A673 (cell line): ENCODE measurements at regions of chr12 and their contacts with region 1.

Region 1: DNA sequence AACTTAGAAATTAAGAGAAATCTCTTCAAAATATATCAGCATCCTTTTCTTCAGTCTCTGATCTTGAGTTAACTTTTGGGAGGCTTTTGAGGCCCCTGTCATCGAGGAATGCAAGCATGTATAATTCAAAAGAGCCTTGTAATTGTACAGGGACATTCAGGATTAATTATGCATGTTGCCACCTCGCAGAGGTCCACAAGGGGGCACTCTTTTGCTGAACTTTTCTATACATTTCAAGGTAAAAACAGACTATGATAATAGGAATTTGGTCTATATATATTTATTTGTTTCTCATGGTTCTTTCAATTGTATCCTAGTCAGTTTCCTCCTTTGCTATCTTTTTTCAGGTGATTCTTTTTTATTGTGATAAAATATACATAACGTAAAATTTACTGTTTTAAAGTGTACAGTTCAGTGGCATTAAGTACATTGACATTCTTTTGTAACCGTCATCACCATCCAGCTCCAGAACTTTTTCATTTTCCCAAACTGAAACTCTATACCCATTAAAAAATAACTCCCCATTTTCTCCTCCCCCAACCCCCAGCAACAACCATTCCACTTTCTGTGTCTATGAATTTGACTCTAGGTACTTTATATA is 47.0 kb upstream of the SLC2A13 start:
- DNase-seq: peak; percentile 73
- H3K4me3 ChIP-seq: no peak overlapping the region
- H3K27ac ChIP-seq: no peak overlapping the region
- H3K4me1 ChIP-seq: no peaks in the 10 kb centered on the region
- H3K27me3 ChIP-seq: no peaks in the 10 kb centered on the region
- CTCF ChIP-seq: peak; percentile 88

Region 2: DNA sequence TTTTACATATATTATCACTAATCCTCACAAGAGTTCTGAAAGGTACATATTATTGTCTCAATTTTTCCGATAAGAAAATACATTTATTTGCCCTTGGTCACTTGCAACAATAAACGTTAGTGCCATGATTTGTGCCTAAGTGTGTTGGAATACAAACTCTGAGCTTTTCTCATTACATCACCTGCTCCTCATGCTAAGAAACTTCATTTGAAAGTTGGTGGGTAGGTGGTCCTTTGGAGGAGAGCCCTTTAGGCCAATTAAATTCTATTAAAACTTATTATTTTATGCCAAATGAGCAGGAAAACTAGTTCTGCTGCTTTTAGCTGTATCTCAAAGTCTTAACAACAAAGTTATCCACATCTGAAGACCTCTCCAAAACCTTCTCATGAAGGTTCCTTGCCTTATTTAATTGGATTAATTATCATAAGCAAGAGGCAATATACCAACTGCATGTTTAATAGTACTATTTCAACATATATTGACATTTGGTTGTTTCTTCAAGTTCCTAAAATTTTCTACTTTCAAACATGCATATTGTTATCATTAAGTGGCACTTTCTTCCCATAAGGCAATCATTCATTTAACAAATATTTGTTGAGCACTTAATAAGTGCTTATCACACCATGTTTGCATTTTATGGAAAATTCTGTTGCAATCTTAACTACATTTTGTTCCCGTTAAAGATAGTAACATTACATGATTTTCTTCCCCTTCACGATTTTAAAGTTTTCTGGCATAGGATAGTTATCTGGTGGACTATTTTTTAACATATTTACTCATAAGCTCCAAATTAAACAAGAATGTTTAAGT is 31.8 kb after region 1 on chr12:
- CTCF ChIA-PET with region 1: no interaction called
- POLR2A ChIA-PET with region 1: interaction called, 10 read pairs
- intact Hi-C with region 1: no loop called
- DNase-seq: no peak
- H3K4me3 ChIP-seq: no peak overlapping the region
- H3K27ac ChIP-seq: no peak overlapping the region
- H3K4me1 ChIP-seq: no peaks in the 10 kb centered on the region
- H3K27me3 ChIP-seq: no peaks in the 10 kb centered on the region
- CTCF ChIP-seq: no peak

Region 3: GRCh38 chr12:40312982-40313576 is 160.2 kb after region 1 on chr12:
- CTCF ChIA-PET with region 1: no interaction called
- POLR2A ChIA-PET with region 1: no interaction called
- intact Hi-C with region 1: loop called (anchors 1 kb)
- DNase-seq: peak; percentile 18
- H3K4me3 ChIP-seq: no peak overlapping the region
- H3K27ac ChIP-seq: no peak overlapping the region
- H3K4me1 ChIP-seq: peaks cover 3% of the 10 kb centered on the region
- H3K27me3 ChIP-seq: no peaks in the 10 kb centered on the region
- CTCF ChIP-seq: peak; percentile 72

Region 4: GRCh38 chr12:40325349-40325960 is 172.6 kb after region 1 on chr12:
- CTCF ChIA-PET with region 1: no interaction called
- POLR2A ChIA-PET with region 1: no interaction called
- intact Hi-C with region 1: no loop called
- DNase-seq: peak; percentile 73
- H3K4me3 ChIP-seq: no peak overlapping the region
- H3K27ac ChIP-seq: no peak overlapping the region
- H3K4me1 ChIP-seq: no peaks in the 10 kb centered on the region
- H3K27me3 ChIP-seq: no peaks in the 10 kb centered on the region
- CTCF ChIP-seq: peak; percentile 85